K562 (cell line): ENCODE measurements at regions of chr3 and their contacts with region 1.

Region 1: GRCh38 chr3:11651900-11652299 is 8.2 kb upstream of the VGLL4 start:
- DNase-seq: peak in 3 of 4 experiments; percentile 30 to 54 (median 38)
- ATAC-seq: no peak
- H3K4me3 ChIP-seq: no peak overlapping the region
- H3K27ac ChIP-seq: no peak overlapping the region
- H3K4me1 ChIP-seq: no peaks in the 10 kb centered on the region
- H3K27me3 ChIP-seq: peaks cover 25 to 31% of the 10 kb centered on the region in 2 experiments
- CTCF ChIP-seq: peak in 2 of 3 experiments; percentile 36 to 67; a peak in 3 of 6 replicates
- EP300 ChIP-seq: no peak
- POLR2A ChIP-seq: no peak
- RAD21 ChIP-seq: peak; percentile 82 to 84

Region 2: GRCh38 chr3:10945683-10946287 is 706.1 kb before region 1 on chr3:
- CTCF ChIA-PET with region 1: interaction called, 8 read pairs
- POLR2A ChIA-PET with region 1: no interaction called
- in situ Hi-C with region 1: loop called (anchors 5 kb)
- intact Hi-C with region 1: loop called (anchors 5 kb)
- DNase-seq: peak; percentile 79 to 92 (median 86)
- ATAC-seq: peak; percentile 99
- H3K4me3 ChIP-seq: no peak overlapping the region
- H3K27ac ChIP-seq: no peak overlapping the region
- H3K4me1 ChIP-seq: no peaks in the 10 kb centered on the region; a peak in 1 of 5 replicates
- H3K27me3 ChIP-seq: peaks cover 0 to 26% of the 10 kb centered on the region in 2 experiments; a peak in 2 of 5 replicates
- CTCF ChIP-seq: peak; percentile 85 to 92 (median 91)
- EP300 ChIP-seq: no peak
- POLR2A ChIP-seq: no peak
- RAD21 ChIP-seq: peak; percentile 65 to 86

Region 3: DNA sequence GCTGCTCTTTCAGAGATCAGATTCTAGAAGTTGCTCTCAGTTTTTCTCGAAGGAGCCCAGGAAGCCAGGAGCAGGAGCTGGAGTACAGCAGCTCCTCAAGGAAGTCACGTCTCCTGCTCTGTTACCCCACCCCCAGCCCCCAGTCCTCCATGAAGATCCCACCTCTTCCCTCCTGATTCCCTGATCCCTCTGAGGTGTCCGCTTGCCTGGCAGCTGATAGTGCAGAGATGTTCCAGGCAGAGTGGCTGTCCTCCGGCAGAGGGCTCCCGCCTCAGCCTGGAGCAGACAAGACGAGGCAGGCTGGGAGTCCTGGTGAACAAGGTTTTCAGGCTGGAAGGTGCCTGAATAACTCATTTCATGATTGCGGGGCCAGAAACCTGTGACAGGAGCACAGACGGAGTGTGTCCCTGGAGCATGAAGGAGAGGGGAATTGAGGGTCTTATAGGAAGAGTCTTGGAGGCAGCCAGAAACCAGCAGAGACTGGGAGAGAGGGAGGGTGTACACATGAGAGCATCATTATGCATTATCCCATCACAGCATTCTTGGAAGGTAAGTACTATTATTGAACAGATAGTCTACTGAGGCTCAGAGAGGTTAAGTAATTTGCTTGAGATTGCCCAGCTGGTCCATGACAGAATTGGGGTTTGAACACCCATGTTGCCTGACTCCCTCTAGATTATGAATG is 496.4 kb before region 1 on chr3:
- CTCF ChIA-PET with region 1: interaction called, 9 read pairs
- POLR2A ChIA-PET with region 1: no interaction called
- in situ Hi-C with region 1: no loop called
- intact Hi-C with region 1: loop called (anchors 5 kb)
- DNase-seq: peak; percentile 31 to 52 (median 46)
- ATAC-seq: peak; percentile 96
- H3K4me3 ChIP-seq: no peak overlapping the region
- H3K27ac ChIP-seq: no peak overlapping the region
- H3K4me1 ChIP-seq: peaks cover 0 to 8% of the 10 kb centered on the region in 2 experiments; a peak in 1 of 5 replicates
- H3K27me3 ChIP-seq: peaks cover 19 to 44% of the 10 kb centered on the region in 2 experiments; a peak in 4 of 5 replicates
- CTCF ChIP-seq: peak; percentile 64 to 70 (median 68)
- EP300 ChIP-seq: no peak
- POLR2A ChIP-seq: no peak
- RAD21 ChIP-seq: peak; percentile 55 to 74

Region 4: DNA sequence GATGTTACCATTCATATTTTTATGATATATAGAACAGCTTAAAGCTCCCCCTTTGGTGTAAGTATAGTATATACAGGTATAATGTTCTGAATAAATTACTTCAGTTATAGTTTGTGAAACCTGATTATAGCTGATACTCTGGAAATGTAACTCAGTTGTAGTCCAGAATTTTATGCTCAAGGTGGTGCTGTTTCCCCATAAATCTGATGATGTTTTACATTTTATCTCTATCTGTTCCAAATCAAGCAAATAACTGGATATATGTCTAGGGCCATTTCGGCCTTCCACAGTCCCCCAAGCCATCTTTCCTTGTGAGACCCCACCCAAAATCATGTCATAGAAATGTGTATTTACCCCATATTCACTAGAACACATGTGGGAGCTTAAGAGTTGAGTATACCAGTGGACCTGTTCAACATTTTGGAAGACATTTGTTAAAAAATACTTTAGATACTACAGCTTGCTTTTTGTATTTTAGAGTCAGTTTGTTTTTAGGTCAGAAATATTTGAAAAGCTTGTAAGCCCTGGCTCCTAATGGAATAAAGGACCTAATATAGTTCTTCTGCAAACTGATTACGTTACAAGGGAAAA is 272.6 kb before region 1 on chr3:
- CTCF ChIA-PET with region 1: interaction called, 44 read pairs
- POLR2A ChIA-PET with region 1: interaction called, 3 read pairs
- in situ Hi-C with region 1: loop called (anchors 5 kb)
- intact Hi-C with region 1: loop called (anchors 1 kb)
- DNase-seq: peak in 2 of 4 experiments; percentile 19 to 29
- ATAC-seq: peak; percentile 74
- H3K4me3 ChIP-seq: no peak overlapping the region
- H3K27ac ChIP-seq: no peak overlapping the region
- H3K4me1 ChIP-seq: no peaks in the 10 kb centered on the region
- H3K27me3 ChIP-seq: no peaks in the 10 kb centered on the region
- CTCF ChIP-seq: peak; percentile 56 to 82 (median 59); a peak in 5 of 6 replicates
- EP300 ChIP-seq: no peak
- POLR2A ChIP-seq: no peak
- RAD21 ChIP-seq: peak; percentile 81 to 88

Region 5: GRCh38 chr3:12175844-12176453 is 524.0 kb after region 1 on chr3:
- CTCF ChIA-PET with region 1: no interaction called
- POLR2A ChIA-PET with region 1: interaction called, 3 read pairs
- in situ Hi-C with region 1: no loop called
- intact Hi-C with region 1: loop called (anchors 1 kb)
- DNase-seq: peak; percentile 67 to 72 (median 69)
- ATAC-seq: peak; percentile 98
- H3K4me3 ChIP-seq: no peak overlapping the region
- H3K27ac ChIP-seq: no peak overlapping the region
- H3K4me1 ChIP-seq: no peaks in the 10 kb centered on the region
- H3K27me3 ChIP-seq: peaks cover 0 to 4% of the 10 kb centered on the region in 2 experiments; a peak in 2 of 5 replicates
- CTCF ChIP-seq: peak; percentile 79 to 90 (median 90)
- EP300 ChIP-seq: no peak
- POLR2A ChIP-seq: no peak
- RAD21 ChIP-seq: peak; percentile 92 to 97